ENCODE measurements at regions of chr6 and their contacts with region 1.

Region 1: DNA sequence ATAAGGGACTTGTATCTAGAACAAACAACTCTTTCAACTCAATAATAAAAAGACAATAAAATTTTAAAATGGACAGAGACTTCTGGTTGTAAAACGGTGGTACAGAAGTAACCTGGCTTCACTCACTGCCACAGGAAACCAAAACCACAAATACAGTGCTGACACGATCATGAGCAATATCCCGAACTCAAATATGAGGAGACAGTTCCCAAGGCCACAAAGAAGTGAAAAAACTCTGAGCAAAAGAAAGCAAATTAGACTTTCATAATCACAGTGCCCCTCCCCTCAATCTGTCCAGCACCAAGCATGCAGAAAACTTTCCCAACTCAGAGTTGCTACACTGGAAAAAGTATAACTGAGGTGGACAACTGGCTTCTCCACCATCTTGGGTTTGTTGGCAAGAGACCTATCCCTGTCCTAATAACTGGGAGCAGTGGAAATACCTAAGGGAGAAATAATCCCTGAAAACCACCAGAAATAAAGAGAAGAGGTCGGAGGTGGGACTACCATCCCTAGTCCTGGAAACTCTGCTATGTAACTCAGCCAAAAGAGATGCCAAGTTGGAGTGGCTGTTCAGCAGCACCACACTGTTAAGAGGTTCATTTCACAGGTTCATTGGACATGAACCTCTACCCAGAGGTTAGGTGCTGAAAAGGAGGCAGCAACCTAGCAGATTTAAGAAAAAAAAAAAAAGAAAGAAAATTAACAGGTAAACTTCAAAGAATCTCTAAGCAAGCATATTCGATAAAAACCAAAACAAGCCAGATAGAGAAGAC is 55.5 kb downstream of the REV3L start:
- DNase-seq: peak; percentile 85
- ATAC-seq: peak; percentile 52
- H3K4me3 ChIP-seq: no peak overlapping the region
- H3K27ac ChIP-seq: peak overlapping the region; percentile 23; the same call in 1 of the 2 replicates
- H3K4me1 ChIP-seq: peaks cover 7% of the 10 kb centered on the region; the same call in 1 of the 2 replicates
- H3K27me3 ChIP-seq: no peaks in the 10 kb centered on the region
- CTCF ChIP-seq: no peak
- POLR2A ChIP-seq: no peak
- RAD21 ChIP-seq: no peak

Region 2: GRCh38 chr6:111382476-111383300 is 44.8 kb before region 1 on chr6:
- CTCF ChIA-PET with region 1: no interaction called
- POLR2A ChIA-PET with region 1: no interaction called
- dilution Hi-C with region 1: no loop called
- in situ Hi-C with region 1: no loop called
- intact Hi-C with region 1: no loop called
- DNase-seq: no peak
- ATAC-seq: no peak
- H3K4me3 ChIP-seq: no peak overlapping the region
- H3K27ac ChIP-seq: no peak overlapping the region
- H3K4me1 ChIP-seq: no peaks in the 10 kb centered on the region; the same call in 1 of the 2 replicates
- H3K27me3 ChIP-seq: no peaks in the 10 kb centered on the region
- CTCF ChIP-seq: no peak
- POLR2A ChIP-seq: no peak
- RAD21 ChIP-seq: no peak

Region 3: GRCh38 chr6:111437573-111437972 is 10.0 kb after region 1 on chr6:
- CTCF ChIA-PET with region 1: no interaction called
- POLR2A ChIA-PET with region 1: no interaction called
- dilution Hi-C with region 1: no loop called
- in situ Hi-C with region 1: no loop called
- intact Hi-C with region 1: loop called (anchors 2 kb)
- DNase-seq: no peak
- ATAC-seq: no peak
- H3K4me3 ChIP-seq: no peak overlapping the region
- H3K27ac ChIP-seq: no peak overlapping the region
- H3K4me1 ChIP-seq: no peaks in the 10 kb centered on the region
- H3K27me3 ChIP-seq: no peaks in the 10 kb centered on the region
- CTCF ChIP-seq: no peak
- POLR2A ChIP-seq: no peak
- RAD21 ChIP-seq: no peak

Region 4: GRCh38 chr6:111462770-111463391 is 35.4 kb after region 1 on chr6:
- CTCF ChIA-PET with region 1: no interaction called
- POLR2A ChIA-PET with region 1: no interaction called
- dilution Hi-C with region 1: no loop called
- in situ Hi-C with region 1: no loop called
- intact Hi-C with region 1: loop called (anchors 5 kb)
- DNase-seq: peak; percentile 88
- ATAC-seq: peak; percentile 87
- H3K4me3 ChIP-seq: no peak overlapping the region
- H3K27ac ChIP-seq: no peak overlapping the region
- H3K4me1 ChIP-seq: peaks cover 6% of the 10 kb centered on the region
- H3K27me3 ChIP-seq: no peaks in the 10 kb centered on the region
- CTCF ChIP-seq: no peak
- POLR2A ChIP-seq: no peak
- RAD21 ChIP-seq: no peak

Measured in IMR-90 (cell line).